CD4-positive, alpha-beta memory T cell (primary cell): ENCODE measurements at regions of chr4 and their contacts with region 1.

Region 1: DNA sequence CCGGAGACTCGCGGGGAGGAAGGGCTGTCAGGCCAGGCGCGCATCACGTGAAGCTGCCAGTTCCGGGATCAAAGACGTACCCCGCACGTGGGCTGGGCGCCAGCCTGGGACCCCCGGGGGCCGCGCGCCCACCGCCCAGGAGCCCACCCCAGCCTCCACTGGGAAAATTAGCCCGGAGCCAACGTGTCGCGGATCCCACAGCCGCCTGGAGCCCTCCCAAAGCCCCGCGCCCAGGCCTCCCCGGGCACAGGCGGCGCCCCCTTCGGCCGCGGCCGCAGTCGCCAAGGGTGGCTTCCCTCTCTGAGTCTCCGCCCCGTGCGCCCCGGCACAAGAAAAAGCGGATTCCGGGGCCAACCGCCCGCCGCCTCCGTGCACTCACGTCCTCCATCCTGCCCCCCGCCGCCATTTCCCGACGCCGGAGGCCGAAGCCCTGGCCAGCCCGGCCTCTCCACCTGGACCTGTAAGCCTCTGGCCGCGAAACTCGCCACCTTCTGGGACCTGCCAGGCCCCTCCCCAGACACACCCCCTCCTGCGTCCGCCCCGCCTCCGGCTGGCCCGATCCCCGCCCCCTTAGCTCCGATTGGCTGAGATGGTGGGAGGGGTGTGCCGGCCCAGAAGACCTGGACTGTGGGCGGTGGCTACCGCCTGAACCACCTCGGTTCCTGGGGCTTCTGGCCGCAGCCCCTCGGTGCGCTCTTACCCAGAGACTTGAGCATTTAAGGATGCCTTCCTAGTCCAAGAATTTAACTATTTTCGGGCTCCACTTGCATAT is at the start of gene TMEM192:
- DNase-seq: peak; percentile 90 to 95 (median 91)
- H3K4me3 ChIP-seq: peak within 1 kb of the TSS; percentile 70 to 89
- H3K4me3 Mint-ChIP-seq: peak within 1 kb of the TSS; percentile 86 to 98 (median 92)
- H3K27ac ChIP-seq: peak within 1 kb of the TSS; percentile 74
- H3K27ac Mint-ChIP-seq: peak within 1 kb of the TSS; percentile 84 to 97 (median 95)
- H3K4me1 ChIP-seq: peaks cover 19% of the 10 kb centered on the region
- H3K4me1 Mint-ChIP-seq: peaks cover 12 to 27% (median 17%) of the 10 kb centered on the region in 4 donors
- H3K27me3 ChIP-seq: no peaks in the 10 kb centered on the region
- H3K27me3 Mint-ChIP-seq: peaks cover 0 to 2% of the 10 kb centered on the region in 2 donors
- total RNA-seq, gene TMEM192: 11.5 to 11.6 TPM

Region 2: GRCh38 chr4:164956766-164957643 is 155.5 kb before region 1 on chr4:
- CTCF ChIA-PET with region 1: interaction called, 4 read pairs
- POLR2A ChIA-PET with region 1: no interaction called
- intact Hi-C with region 1: loop called (anchors 1 kb)
- DNase-seq: peak; percentile 54 to 70 (median 66)
- H3K4me3 ChIP-seq: peak overlapping the region; percentile 61 to 72
- H3K4me3 Mint-ChIP-seq: peak overlapping the region; percentile 85 to 93 (median 89)
- H3K27ac ChIP-seq: no peak overlapping the region
- H3K27ac Mint-ChIP-seq: peak overlapping the region in 6 of 7 donors; percentile 6 to 78 (median 48)
- H3K4me1 ChIP-seq: peaks cover 11% of the 10 kb centered on the region
- H3K4me1 Mint-ChIP-seq: peaks cover 5 to 25% (median 15%) of the 10 kb centered on the region in 4 donors
- H3K27me3 ChIP-seq: no peaks in the 10 kb centered on the region
- H3K27me3 Mint-ChIP-seq: peaks cover 5 to 6% of the 10 kb centered on the region in 2 donors

Region 3: DNA sequence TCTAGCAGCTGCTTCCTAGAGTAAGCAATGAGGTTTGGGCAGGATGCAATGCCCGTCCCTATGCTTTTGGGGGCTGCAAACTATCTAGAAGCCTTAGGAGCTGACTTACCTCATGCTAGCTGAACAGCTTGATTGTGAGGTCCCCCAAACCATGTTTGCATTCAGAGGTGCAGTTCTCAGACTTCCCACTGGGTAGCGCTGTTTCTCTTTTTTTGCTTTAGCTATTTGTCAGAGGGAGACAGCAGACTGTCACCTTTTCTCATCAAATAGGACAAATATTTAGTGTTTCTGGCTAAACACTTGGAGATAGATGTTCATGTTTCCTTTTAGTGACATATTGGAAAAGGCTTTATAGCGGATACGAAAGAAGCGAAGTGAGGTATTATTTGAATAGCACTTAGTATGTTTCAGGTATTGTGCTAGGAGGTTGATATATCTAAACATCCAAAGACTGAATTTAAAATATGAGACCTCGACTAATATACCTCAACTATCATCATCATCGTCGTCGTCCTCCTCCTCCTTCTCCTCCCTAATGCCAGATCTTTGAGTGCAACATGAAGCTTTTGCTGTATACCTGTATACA is 18.8 kb after region 1 on chr4:
- CTCF ChIA-PET with region 1: interaction called, 23 read pairs
- POLR2A ChIA-PET with region 1: no interaction called
- intact Hi-C with region 1: no loop called
- DNase-seq: peak; percentile 62 to 77 (median 68)
- H3K4me3 ChIP-seq: no peak overlapping the region
- H3K4me3 Mint-ChIP-seq: no peak overlapping the region
- H3K27ac ChIP-seq: no peak overlapping the region
- H3K27ac Mint-ChIP-seq: peak overlapping the region in 1 of 7 donors; percentile 1
- H3K4me1 ChIP-seq: no peaks in the 10 kb centered on the region
- H3K4me1 Mint-ChIP-seq: peaks cover 0 to 2% (median 0%) of the 10 kb centered on the region in 4 donors
- H3K27me3 ChIP-seq: no peaks in the 10 kb centered on the region
- H3K27me3 Mint-ChIP-seq: peaks cover 23 to 24% of the 10 kb centered on the region in 2 donors

Region 4: DNA sequence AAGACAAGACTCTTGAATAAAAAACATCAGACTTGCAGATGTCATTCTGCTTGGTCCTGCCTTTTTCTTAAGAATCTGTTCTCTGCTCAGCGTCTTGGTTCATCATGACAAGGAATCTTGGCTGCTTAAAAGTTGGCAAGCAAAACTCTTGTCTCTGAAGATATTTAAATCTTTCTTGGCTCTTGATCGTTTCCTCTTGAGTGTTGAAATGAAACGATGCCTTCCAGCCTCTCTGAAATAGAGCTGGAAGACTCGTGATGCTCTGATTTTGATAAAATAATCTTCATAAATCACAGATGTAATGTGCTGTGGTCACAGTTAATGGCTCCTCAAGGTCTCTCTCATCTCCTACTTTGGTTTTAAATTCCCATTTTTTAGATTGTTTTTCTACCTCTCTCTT is 40.0 kb after region 1 on chr4:
- CTCF ChIA-PET with region 1: no interaction called
- POLR2A ChIA-PET with region 1: no interaction called
- intact Hi-C with region 1: no loop called
- DNase-seq: no peak
- H3K4me3 ChIP-seq: no peak overlapping the region
- H3K4me3 Mint-ChIP-seq: no peak overlapping the region
- H3K27ac ChIP-seq: no peak overlapping the region
- H3K27ac Mint-ChIP-seq: no peak overlapping the region
- H3K4me1 ChIP-seq: no peaks in the 10 kb centered on the region
- H3K4me1 Mint-ChIP-seq: no peaks in the 10 kb centered on the region
- H3K27me3 ChIP-seq: peaks cover 6% of the 10 kb centered on the region
- H3K27me3 Mint-ChIP-seq: peaks cover 20 to 33% of the 10 kb centered on the region in 2 donors

Region 5: DNA sequence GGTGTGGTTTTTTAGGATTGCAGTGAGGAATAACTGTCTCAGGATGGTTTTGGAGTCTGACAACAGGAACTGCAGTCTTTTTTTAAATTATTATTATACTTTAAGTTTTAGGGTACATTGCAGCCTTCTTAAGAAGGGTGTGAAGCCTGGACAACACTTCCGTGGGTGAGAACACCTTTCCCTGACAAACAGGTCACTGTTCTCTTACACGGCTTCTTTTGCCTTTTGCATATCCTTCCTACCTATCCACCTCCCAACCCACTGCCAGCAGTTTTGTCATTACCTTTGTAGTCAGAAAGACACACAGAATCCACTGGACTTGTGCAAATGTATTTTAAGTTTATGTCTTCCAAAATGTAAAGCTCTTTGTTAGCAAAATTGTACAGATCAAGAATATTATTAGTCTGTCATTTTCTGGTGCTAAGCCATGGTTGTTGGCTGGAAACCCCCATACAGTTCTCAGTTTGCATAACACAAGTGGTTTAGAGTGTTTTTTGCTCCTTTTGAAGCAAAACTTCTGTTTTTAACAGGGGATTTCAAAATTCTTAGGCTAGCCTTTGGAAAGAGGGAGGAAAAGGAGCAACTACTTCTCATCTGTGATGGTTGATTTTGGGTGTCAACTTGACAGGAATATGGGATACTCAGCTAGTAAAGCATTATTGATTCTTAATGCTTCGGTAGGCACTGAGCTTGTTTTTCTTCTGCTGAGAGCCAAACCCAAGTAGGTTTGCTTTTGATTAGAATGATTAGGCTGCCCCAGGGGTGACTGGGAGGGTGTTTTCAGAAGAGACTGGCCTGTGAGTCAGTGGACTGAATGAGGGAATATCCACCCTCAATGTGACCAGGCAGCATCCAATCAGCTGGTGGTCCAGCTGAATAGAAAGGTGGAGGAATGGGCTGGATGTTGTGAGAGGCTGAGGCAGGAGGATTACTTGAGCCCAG is 65.4 kb after region 1 on chr4:
- CTCF ChIA-PET with region 1: no interaction called
- POLR2A ChIA-PET with region 1: no interaction called
- intact Hi-C with region 1: no loop called
- DNase-seq: no peak
- H3K4me3 ChIP-seq: no peak overlapping the region
- H3K4me3 Mint-ChIP-seq: no peak overlapping the region
- H3K27ac ChIP-seq: no peak overlapping the region
- H3K27ac Mint-ChIP-seq: no peak overlapping the region
- H3K4me1 ChIP-seq: no peaks in the 10 kb centered on the region
- H3K4me1 Mint-ChIP-seq: no peaks in the 10 kb centered on the region
- H3K27me3 ChIP-seq: no peaks in the 10 kb centered on the region
- H3K27me3 Mint-ChIP-seq: peaks cover 2 to 13% of the 10 kb centered on the region in 2 donors

Region 6: DNA sequence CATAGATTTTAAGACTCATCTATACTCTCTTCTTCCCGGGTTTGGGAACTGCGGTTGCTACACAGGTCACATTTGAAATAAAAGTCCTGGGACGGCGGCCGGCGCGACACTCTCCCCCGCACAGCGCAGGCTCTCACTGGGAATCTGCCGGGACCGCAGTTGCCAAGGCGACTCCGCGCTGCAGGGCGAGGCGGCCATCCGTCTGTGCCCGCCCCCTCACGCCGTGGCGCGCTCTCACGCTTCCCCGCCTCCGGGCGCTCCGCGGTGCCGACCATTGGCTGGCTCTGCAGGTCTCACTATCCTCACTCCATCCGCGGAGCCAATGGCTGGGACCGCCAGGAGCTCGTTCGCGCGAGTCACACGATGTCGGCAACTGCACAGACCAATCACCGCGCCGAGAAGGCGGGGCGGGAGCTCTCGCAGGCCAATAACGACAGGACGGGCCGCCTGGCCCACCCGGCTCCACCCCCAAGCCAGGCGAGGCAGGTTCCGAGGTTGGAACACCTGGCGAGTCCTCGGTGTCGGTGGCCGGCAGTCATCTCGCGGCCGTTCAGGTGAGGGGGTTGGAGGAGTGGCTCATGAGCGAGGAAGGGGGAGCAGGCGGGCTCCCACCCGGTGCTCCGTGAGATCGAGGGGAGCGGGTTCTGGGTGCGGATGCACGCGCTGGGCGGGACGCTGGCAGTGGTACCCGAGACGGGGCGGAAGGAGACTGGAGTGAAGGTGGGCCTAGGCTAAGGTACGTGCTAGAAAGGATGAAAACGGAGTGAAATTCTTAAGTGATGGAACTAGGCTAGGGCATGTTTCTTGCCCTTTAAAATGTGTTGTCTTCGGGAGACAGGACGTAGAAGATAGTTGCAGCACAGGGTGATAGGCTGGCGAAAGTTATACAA is 214.9 kb after region 1 on chr4 and contains the start of gene MSMO1:
- CTCF ChIA-PET with region 1: interaction called, 19 read pairs
- POLR2A ChIA-PET with region 1: interaction called, 27 read pairs
- intact Hi-C with region 1: loop called (anchors 1 kb)
- DNase-seq: peak; percentile 97 to 99 (median 98)
- H3K4me3 ChIP-seq: peak within 1 kb of the TSS; percentile 74 to 96
- H3K4me3 Mint-ChIP-seq: no peak within 1 kb of the TSS
- H3K27ac ChIP-seq: peak within 1 kb of the TSS; percentile 74
- H3K27ac Mint-ChIP-seq: no peak within 1 kb of the TSS
- H3K4me1 ChIP-seq: peaks cover 51% of the 10 kb centered on the region
- H3K4me1 Mint-ChIP-seq: peaks cover 21 to 38% (median 28%) of the 10 kb centered on the region in 4 donors
- H3K27me3 ChIP-seq: no peaks in the 10 kb centered on the region
- H3K27me3 Mint-ChIP-seq: no peaks in the 10 kb centered on the region
- total RNA-seq, gene MSMO1: 24.4 to 24.8 TPM

Region 7: DNA sequence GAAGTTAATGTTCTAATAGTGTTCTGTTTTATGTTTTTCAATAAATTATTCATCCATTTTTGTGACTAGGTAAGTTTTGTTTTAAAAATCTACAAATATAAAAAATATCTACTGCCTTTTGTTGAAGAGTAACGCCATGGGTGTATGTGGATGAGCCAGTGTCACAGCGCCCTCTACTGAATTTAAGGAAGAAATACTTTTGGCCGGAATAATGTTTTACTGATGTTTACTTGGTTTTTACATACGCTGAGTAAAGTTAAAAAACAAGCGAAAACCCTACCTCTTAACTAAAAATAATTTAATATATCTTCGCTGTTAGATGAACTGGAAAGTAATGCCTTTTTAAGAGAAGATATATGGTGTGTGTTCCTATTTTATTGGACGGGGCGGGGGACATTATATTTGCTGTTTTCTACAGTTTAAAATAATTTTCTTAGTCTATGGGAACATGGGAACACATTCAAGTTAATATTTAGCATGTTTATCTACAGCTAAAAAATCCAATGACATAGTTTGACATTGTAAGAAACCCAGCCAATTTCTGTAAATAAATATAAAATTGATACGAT is 352.3 kb after region 1 on chr4:
- CTCF ChIA-PET with region 1: interaction called, 12 read pairs
- POLR2A ChIA-PET with region 1: no interaction called
- intact Hi-C with region 1: loop called (anchors 5 kb)
- DNase-seq: peak in 4 of 5 donors; percentile 37 to 43 (median 38)
- H3K4me3 ChIP-seq: no peak overlapping the region
- H3K4me3 Mint-ChIP-seq: no peak overlapping the region
- H3K27ac ChIP-seq: no peak overlapping the region
- H3K27ac Mint-ChIP-seq: no peak overlapping the region
- H3K4me1 ChIP-seq: no peaks in the 10 kb centered on the region
- H3K4me1 Mint-ChIP-seq: no peaks in the 10 kb centered on the region
- H3K27me3 ChIP-seq: no peaks in the 10 kb centered on the region
- H3K27me3 Mint-ChIP-seq: peaks cover 0 to 2% of the 10 kb centered on the region in 2 donors